ENCODE measurements at regions of chr11 and their contacts with region 1.

Region 1: GRCh38 chr11:8682303-8683114 is at the starts of genes RPL27A and TRIM66:
- DNase-seq: peak; percentile 98
- ATAC-seq: peak; percentile 93
- H3K4me3 ChIP-seq: peak within 1 kb of the TSS; percentile 82 to 99 (median 88)
- H3K4me3 Mint-ChIP-seq: peak within 1 kb of the TSS; percentile 94
- H3K27ac ChIP-seq: peak within 1 kb of the TSS; percentile 87 to 98
- H3K27ac Mint-ChIP-seq: peak within 1 kb of the TSS; percentile 97
- H3K4me1 ChIP-seq: peaks cover 25 to 26% of the 10 kb centered on the region in 2 donors
- H3K4me1 Mint-ChIP-seq: peaks cover 41% of the 10 kb centered on the region
- H3K27me3 ChIP-seq: no peaks in the 10 kb centered on the region
- H3K27me3 Mint-ChIP-seq: no peaks in the 10 kb centered on the region
- CTCF ChIP-seq: peak; percentile 18
- total RNA-seq, gene RPL27A: 1,369 and 1,473 TPM in 2 replicates
- total RNA-seq, gene TRIM66: 21.1 and 21.4 TPM in 2 replicates

Region 2: DNA sequence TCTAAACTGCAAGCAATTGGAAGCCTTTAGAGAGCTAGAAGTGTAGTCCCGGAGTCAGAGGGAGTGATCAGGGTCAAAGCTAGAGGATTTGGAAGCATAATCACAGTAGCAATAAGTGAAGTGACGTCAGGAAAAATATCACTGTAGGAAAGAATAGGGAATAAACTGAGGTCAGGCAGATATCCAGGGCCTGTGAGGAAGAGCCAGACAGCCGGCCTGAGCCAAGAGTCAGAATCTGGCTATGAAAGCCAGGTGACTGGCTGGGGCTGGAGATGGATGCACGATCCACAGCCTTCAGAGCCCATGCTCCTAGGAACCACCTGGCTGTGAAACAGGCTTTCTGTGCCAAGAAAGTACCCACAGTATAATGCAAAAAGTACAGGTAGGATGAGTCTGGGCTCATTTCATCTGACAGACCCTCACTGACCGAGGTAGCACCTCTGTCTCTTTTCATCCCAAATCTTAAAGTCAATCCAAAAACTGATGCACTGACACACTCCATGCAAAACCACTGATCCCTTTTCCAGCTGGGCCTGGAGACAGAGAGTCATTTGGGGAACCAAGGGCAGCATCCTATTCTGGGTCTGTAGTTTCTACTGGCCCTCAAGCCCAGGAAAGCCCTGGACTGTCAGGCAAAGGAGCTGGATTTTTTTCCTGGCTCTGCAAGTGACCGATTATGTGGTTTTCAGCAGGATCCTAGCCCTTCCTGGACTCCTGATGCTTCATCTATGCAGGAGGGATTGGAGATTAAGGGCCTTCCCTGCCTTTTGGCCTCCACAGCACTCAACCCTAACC is 21.3 kb before region 1 on chr11:
- CTCF ChIA-PET with region 1: no interaction called
- POLR2A ChIA-PET with region 1: no interaction called
- intact Hi-C with region 1: no loop called
- DNase-seq: no peak
- ATAC-seq: no peak
- H3K4me3 ChIP-seq: no peak overlapping the region
- H3K4me3 Mint-ChIP-seq: no peak overlapping the region
- H3K27ac ChIP-seq: no peak overlapping the region
- H3K27ac Mint-ChIP-seq: no peak overlapping the region
- H3K4me1 ChIP-seq: no peaks in the 10 kb centered on the region
- H3K4me1 Mint-ChIP-seq: no peaks in the 10 kb centered on the region
- H3K27me3 ChIP-seq: no peaks in the 10 kb centered on the region
- H3K27me3 Mint-ChIP-seq: no peaks in the 10 kb centered on the region
- CTCF ChIP-seq: no peak

Region 3: GRCh38 chr11:8671193-8671612 is 11.3 kb before region 1 on chr11:
- CTCF ChIA-PET with region 1: no interaction called
- POLR2A ChIA-PET with region 1: no interaction called
- intact Hi-C with region 1: no loop called
- DNase-seq: no peak
- ATAC-seq: no peak
- H3K4me3 ChIP-seq: no peak overlapping the region
- H3K4me3 Mint-ChIP-seq: no peak overlapping the region
- H3K27ac ChIP-seq: no peak overlapping the region
- H3K27ac Mint-ChIP-seq: no peak overlapping the region
- H3K4me1 ChIP-seq: no peaks in the 10 kb centered on the region
- H3K4me1 Mint-ChIP-seq: no peaks in the 10 kb centered on the region
- H3K27me3 ChIP-seq: no peaks in the 10 kb centered on the region
- H3K27me3 Mint-ChIP-seq: no peaks in the 10 kb centered on the region
- CTCF ChIP-seq: no peak

Region 4: DNA sequence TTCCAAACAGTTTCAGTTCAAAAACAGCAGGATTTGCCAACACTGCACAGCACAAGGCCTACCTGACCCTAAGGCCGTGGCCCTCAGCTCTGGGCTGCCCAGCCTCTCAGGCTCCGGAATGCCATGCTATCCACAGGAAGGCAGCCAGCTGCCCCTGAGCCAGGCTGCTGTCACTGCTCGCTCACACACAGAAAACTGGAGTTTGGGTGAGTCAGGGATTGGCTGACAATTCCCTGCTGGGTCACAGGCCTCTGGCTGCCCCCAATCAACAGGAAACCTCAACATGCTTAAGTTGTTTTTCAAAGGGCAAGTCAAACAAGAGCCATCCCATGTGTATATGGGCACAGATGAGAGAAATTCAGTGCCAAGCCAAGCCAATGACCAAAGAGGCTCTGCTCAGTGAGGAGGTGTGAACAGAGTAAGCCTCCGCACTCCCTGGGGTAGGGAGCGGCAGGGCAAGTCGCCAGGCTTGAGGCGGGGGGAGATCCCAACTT is 50.3 kb after region 1 on chr11:
- CTCF ChIA-PET with region 1: no interaction called
- POLR2A ChIA-PET with region 1: interaction called, 3 read pairs
- intact Hi-C with region 1: loop called (anchors 5 kb)
- DNase-seq: no peak
- ATAC-seq: peak; percentile 31
- H3K4me3 ChIP-seq: peak overlapping the region in 1 of 5 experiments; percentile 35
- H3K4me3 Mint-ChIP-seq: peak overlapping the region; percentile 73
- H3K27ac ChIP-seq: peak overlapping the region; percentile 73 to 86
- H3K27ac Mint-ChIP-seq: peak overlapping the region; percentile 90
- H3K4me1 ChIP-seq: peaks cover 34 to 37% of the 10 kb centered on the region in 2 donors
- H3K4me1 Mint-ChIP-seq: peaks cover 32% of the 10 kb centered on the region
- H3K27me3 ChIP-seq: peaks cover 0 to 5% (median 0%) of the 10 kb centered on the region in 4 experiments
- H3K27me3 Mint-ChIP-seq: no peaks in the 10 kb centered on the region
- CTCF ChIP-seq: no peak

Region 5: GRCh38 chr11:8813658-8814057 is 131.1 kb after region 1 on chr11:
- CTCF ChIA-PET with region 1: no interaction called
- POLR2A ChIA-PET with region 1: interaction called, 4 read pairs
- intact Hi-C with region 1: loop called (anchors 2 kb)
- DNase-seq: peak; percentile 59
- ATAC-seq: peak; percentile 56
- H3K4me3 ChIP-seq: peak overlapping the region in 1 of 5 experiments; percentile 8
- H3K4me3 Mint-ChIP-seq: no peak overlapping the region
- H3K27ac ChIP-seq: peak overlapping the region in 1 of 2 donors; percentile 76
- H3K27ac Mint-ChIP-seq: no peak overlapping the region
- H3K4me1 ChIP-seq: peaks cover 23 to 25% of the 10 kb centered on the region in 2 donors
- H3K4me1 Mint-ChIP-seq: peaks cover 10% of the 10 kb centered on the region
- H3K27me3 ChIP-seq: peaks cover 0 to 18% (median 6%) of the 10 kb centered on the region in 4 experiments
- H3K27me3 Mint-ChIP-seq: peaks cover 16% of the 10 kb centered on the region
- CTCF ChIP-seq: peak; percentile 65